A549 (cell line): ENCODE measurements at regions of chr4 and their contacts with region 1.

Region 1: DNA sequence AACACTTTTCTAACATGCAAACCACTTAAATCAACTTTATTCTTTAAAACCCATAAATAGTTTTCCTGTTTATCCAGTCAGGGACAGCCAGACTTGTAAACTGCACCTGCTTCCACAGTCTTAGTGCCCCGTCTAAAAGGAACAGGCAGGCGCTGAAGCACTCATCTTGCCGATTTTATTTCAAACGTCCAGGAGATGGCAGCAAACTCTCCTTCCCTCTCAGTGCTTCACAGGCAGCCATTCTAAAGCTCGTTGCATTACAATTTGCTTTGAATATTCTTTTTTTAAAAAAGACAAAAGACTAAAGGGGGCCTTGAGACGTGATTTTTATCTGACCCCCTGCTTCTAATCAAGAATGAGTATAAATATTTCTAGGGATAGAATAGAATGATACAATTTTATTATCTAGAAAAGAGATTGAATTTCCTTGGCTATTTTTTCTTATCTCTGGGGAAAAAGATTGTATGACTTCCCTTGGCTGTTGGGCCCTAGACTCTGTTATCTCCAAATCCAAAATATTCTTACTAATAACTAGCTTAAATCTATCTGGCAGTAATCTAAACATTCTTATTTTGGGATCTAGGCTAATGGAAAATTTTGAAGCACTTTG is 93.6 kb upstream of the MYOZ2 start:
- DNase-seq: peak; percentile 56 to 81
- ATAC-seq: peak; percentile 92 to 93
- H3K4me3 ChIP-seq: no peak overlapping the region
- H3K27ac ChIP-seq: peak overlapping the region; percentile 78 to 80; a peak in 5 of 6 replicates
- H3K4me1 ChIP-seq: peaks cover 63% of the 10 kb centered on the region
- CTCF ChIP-seq: peak; percentile 70
- EP300 ChIP-seq: no peak
- POLR2A ChIP-seq: no peak
- RAD21 ChIP-seq: peak; percentile 77 to 82

Region 2: GRCh38 chr4:118981839-118982381 is 60.1 kb before region 1 on chr4:
- CTCF ChIA-PET with region 1: interaction called, 20 read pairs
- POLR2A ChIA-PET with region 1: no interaction called
- DNase-seq: peak; percentile 50 to 64
- ATAC-seq: peak; percentile 91 to 94
- H3K4me3 ChIP-seq: no peak overlapping the region
- H3K27ac ChIP-seq: no peak overlapping the region
- H3K4me1 ChIP-seq: 0 out of 3 replicates have a peak, but pooled peaks cover 3% of the 10 kb centered on the region
- CTCF ChIP-seq: peak; percentile 74
- EP300 ChIP-seq: no peak
- POLR2A ChIP-seq: no peak
- RAD21 ChIP-seq: peak; percentile 88 to 92

Region 3: GRCh38 chr4:119031218-119031617 is 10.8 kb before region 1 on chr4:
- CTCF ChIA-PET with region 1: interaction called, 18 read pairs
- POLR2A ChIA-PET with region 1: no interaction called
- DNase-seq: no peak
- ATAC-seq: no peak
- H3K4me3 ChIP-seq: no peak overlapping the region
- H3K27ac ChIP-seq: no peak overlapping the region
- H3K4me1 ChIP-seq: peaks cover 18% of the 10 kb centered on the region
- CTCF ChIP-seq: no peak
- EP300 ChIP-seq: no peak
- POLR2A ChIP-seq: no peak
- RAD21 ChIP-seq: no peak

Region 4: DNA sequence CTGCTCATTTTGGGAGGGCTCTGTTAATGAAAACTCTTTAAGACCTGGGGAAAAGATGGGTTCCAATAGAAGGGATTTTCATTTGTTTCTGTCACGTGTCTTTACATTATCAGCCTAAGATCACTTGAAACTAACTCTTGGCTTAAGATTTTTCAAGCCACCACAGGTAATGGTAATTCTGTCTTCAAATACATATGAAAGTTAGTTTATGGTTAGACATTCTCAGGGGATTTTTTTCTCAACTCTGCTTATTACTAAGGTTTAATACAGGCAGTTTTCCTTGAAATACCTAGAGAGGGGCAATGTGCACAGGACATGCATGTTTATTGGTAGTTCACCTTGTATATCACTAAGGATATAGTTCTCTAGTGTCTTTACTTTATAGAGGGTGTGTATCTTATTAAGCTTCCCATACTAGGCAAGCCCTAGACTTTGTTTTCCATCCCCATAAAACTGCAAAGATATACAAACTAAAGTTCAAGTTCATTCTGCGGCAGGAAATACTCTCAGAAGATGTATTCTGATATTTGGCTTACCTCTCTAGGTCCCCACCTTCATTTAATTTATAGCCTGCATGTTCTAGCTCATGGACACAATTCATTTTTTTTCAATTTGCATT is 55.3 kb after region 1 on chr4:
- CTCF ChIA-PET with region 1: interaction called, 15 read pairs
- POLR2A ChIA-PET with region 1: no interaction called
- DNase-seq: no peak
- ATAC-seq: no peak
- H3K4me3 ChIP-seq: no peak overlapping the region
- H3K27ac ChIP-seq: peak overlapping the region; percentile 42 to 64; a peak in 3 of 6 replicates
- H3K4me1 ChIP-seq: peaks cover 57% of the 10 kb centered on the region
- CTCF ChIP-seq: no peak
- EP300 ChIP-seq: no peak
- POLR2A ChIP-seq: no peak
- RAD21 ChIP-seq: no peak